Heart right ventricle (tissue), 16 donors: ENCODE measurements at regions of chr9 and their contacts with region 1.

Region 1: GRCh38 chr9:137672907-137673791 is 54.3 kb downstream of the EHMT1 start:
- DNase-seq: peak; percentile 31 to 51
- ATAC-seq: peak; percentile 39 to 70 (median 55)
- H3K4me3 ChIP-seq: no peak overlapping the region
- H3K27ac ChIP-seq: peak overlapping the region in 6 of 10 donors; percentile 1 to 56 (median 10)
- H3K4me1 ChIP-seq: peaks cover 9 to 54% (median 44%) of the 10 kb centered on the region in 9 donors
- H3K27me3 ChIP-seq: no peaks in the 10 kb centered on the region
- CTCF ChIP-seq: peak; percentile 80 to 90 (median 86)

Region 2: GRCh38 chr9:137618105-137619067 is 54.8 kb before region 1 on chr9 and contains the start of gene EHMT1:
- intact Hi-C with region 1: loop called in 1 of 10 experiments (anchors 10 kb)
- DNase-seq: peak; percentile 85 to 91
- ATAC-seq: peak; percentile 81 to 94 (median 84)
- H3K4me3 ChIP-seq: peak within 1 kb of the TSS; percentile 70 to 100 (median 94)
- H3K27ac ChIP-seq: peak within 1 kb of the TSS; percentile 89 to 97 (median 94)
- H3K4me1 ChIP-seq: peaks cover 17 to 55% (median 44%) of the 10 kb centered on the region in 9 donors
- H3K27me3 ChIP-seq: no peaks in the 10 kb centered on the region
- CTCF ChIP-seq: no peak
- total RNA-seq, gene EHMT1: 26.4 to 39.7 (median 31.1) TPM

Region 3: GRCh38 chr9:137694967-137695879 is 22.1 kb after region 1 on chr9:
- intact Hi-C with region 1: loop called in 1 of 10 experiments (anchors 2 kb)
- DNase-seq: peak; percentile 52 to 54
- ATAC-seq: peak; percentile 80 to 92 (median 85)
- H3K4me3 ChIP-seq: no peak overlapping the region
- H3K27ac ChIP-seq: no peak overlapping the region
- H3K4me1 ChIP-seq: peaks cover 15 to 50% (median 39%) of the 10 kb centered on the region in 9 donors
- H3K27me3 ChIP-seq: no peaks in the 10 kb centered on the region
- CTCF ChIP-seq: peak; percentile 36 to 80 (median 72)

Region 4: DNA sequence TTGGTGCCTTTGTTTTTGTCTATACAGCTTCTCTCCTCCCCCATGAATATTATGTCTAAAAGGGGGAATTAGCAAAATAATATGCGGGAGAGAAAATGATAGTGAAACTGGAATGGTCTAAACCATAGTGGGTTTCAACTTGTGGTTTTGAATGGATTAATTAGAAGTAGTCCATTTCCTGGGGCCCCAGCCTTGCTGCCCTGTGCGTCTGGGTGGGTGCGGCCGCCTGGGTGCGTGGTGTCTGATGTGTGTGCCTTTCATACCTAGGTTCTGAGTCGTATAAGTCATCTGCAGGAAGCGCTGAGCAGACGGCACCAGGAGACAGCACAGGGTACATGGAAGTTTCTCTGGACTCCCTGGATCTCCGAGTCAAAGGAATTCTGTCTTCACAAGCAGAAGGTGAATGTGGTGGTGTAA is 84.5 kb after region 1 on chr9:
- intact Hi-C with region 1: loop called in 2 of 10 experiments (anchors 10 kb)
- DNase-seq: no peak
- ATAC-seq: no peak
- H3K4me3 ChIP-seq: no peak overlapping the region
- H3K27ac ChIP-seq: no peak overlapping the region
- H3K4me1 ChIP-seq: peaks cover 0 to 13% (median 0%) of the 10 kb centered on the region in 9 donors
- H3K27me3 ChIP-seq: no peaks in the 10 kb centered on the region
- CTCF ChIP-seq: no peak

Region 5: DNA sequence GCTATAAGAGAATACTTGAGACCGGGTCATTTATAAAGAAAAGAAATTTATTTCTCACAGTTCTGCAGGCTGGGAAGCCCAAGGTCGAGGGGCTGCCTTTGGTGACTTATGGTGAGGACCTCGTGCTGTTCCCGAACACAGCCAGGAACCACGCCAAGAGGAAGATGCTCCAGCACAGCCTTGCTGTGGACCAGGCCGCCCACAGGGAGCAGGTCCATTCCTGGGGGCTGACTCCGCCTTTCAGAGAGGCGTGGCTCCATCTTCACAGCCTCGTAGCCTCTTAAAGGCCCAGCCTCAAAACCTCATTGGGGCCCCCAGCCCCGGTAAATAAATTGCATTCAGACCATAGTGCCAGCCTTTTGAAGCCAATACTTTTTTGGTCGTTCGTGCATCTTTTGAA is 110.9 kb after region 1 on chr9:
- intact Hi-C with region 1: no loop called
- DNase-seq: no peak
- ATAC-seq: no peak
- H3K4me3 ChIP-seq: no peak overlapping the region
- H3K27ac ChIP-seq: no peak overlapping the region
- H3K4me1 ChIP-seq: no peaks in the 10 kb centered on the region
- H3K27me3 ChIP-seq: no peaks in the 10 kb centered on the region
- CTCF ChIP-seq: no peak